ENCODE measurements at regions of chr3 and their contacts with region 1.

Region 1: GRCh38 chr3:105676621-105677300 is 192.1 kb downstream of the CBLB start:
- DNase-seq: no peak
- H3K4me3 Mint-ChIP-seq: peak overlapping the region; percentile 1
- H3K27ac Mint-ChIP-seq: peak overlapping the region; percentile 85
- H3K4me1 Mint-ChIP-seq: peaks cover 36% of the 10 kb centered on the region
- H3K27me3 Mint-ChIP-seq: no peaks in the 10 kb centered on the region

Region 2: GRCh38 chr3:105747060-105747541 is 70.3 kb after region 1 on chr3:
- intact Hi-C with region 1: loop called (anchors 1 kb)
- DNase-seq: no peak
- H3K4me3 Mint-ChIP-seq: peak overlapping the region; percentile 64
- H3K27ac Mint-ChIP-seq: peak overlapping the region; percentile 81
- H3K4me1 Mint-ChIP-seq: peaks cover 79% of the 10 kb centered on the region
- H3K27me3 Mint-ChIP-seq: no peaks in the 10 kb centered on the region

Region 3: GRCh38 chr3:105774444-105775180 is 97.9 kb after region 1 on chr3:
- intact Hi-C with region 1: loop called (anchors 5 kb)
- DNase-seq: no peak
- H3K4me3 Mint-ChIP-seq: no peak overlapping the region
- H3K27ac Mint-ChIP-seq: peak overlapping the region; percentile 76
- H3K4me1 Mint-ChIP-seq: peaks cover 71% of the 10 kb centered on the region
- H3K27me3 Mint-ChIP-seq: no peaks in the 10 kb centered on the region

Region 4: GRCh38 chr3:105836533-105836932 is 159.8 kb after region 1 on chr3:
- intact Hi-C with region 1: loop called (anchors 1 kb)
- DNase-seq: peak; percentile 27
- H3K4me3 Mint-ChIP-seq: peak overlapping the region; percentile 71
- H3K27ac Mint-ChIP-seq: peak overlapping the region; percentile 93
- H3K4me1 Mint-ChIP-seq: peaks cover 85% of the 10 kb centered on the region
- H3K27me3 Mint-ChIP-seq: no peaks in the 10 kb centered on the region

Region 5: DNA sequence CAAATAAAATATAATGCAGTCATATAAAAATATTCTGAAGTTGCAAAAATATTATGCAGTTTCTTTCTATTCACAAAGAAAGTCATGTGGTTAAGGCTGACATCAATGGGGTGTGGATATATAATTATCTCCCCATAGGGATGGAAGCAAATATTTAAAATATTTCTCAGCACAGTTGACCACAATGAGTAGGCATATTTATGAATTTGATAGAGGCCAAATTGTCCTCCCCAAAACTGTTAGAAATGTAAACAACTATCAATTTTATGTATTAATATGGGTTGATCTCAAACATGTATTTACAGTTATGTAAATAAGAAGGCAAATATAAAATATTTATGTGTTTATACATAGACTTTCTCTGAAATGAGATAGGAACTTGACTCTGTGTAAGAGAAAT is 438.1 kb after region 1 on chr3:
- intact Hi-C with region 1: no loop called
- DNase-seq: no peak
- H3K4me3 Mint-ChIP-seq: no peak overlapping the region
- H3K27ac Mint-ChIP-seq: no peak overlapping the region
- H3K4me1 Mint-ChIP-seq: peaks cover 32% of the 10 kb centered on the region
- H3K27me3 Mint-ChIP-seq: no peaks in the 10 kb centered on the region

Region 6: DNA sequence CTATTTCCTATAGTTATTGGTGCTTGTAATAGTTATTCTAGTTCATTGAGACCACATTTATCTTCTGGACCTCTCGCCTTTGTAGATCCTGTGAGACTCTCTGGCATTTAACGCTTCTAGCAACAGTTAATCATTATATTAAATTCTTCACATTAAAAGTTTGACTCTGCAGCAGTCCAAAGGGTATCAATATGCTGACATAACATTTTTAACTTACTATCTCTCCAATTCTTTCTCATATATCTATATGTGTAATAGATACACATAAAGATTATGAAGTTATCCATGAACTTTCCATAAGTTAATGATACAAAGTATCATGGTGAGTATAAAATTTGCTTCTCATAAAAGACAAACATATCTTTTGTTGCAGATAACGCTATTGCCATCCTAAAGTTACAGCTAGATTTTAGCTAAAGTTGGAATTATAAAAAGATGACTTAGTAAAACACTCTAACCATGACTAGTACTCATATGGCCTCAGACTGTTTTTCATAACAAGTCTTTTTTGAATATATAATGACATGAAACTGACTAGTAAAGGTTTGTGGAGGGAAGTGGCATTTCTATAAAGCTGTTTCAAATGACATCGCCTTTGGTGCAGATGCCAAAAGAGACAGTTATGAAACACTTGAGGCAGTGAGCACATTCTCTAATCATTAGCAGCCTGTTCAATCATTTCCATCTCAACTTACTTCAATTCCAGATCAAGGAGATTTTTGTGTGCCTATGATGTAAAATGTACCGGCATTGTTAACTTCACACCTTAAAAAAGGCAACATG is 571.3 kb after region 1 on chr3:
- intact Hi-C with region 1: loop called (anchors 1 kb)
- DNase-seq: no peak
- H3K4me3 Mint-ChIP-seq: peak overlapping the region; percentile 16
- H3K27ac Mint-ChIP-seq: peak overlapping the region; percentile 67
- H3K4me1 Mint-ChIP-seq: peaks cover 32% of the 10 kb centered on the region
- H3K27me3 Mint-ChIP-seq: no peaks in the 10 kb centered on the region

Region 7: GRCh38 chr3:106534206-106534605 is 857.4 kb after region 1 on chr3:
- intact Hi-C with region 1: loop called (anchors 2 kb)
- DNase-seq: peak; percentile 40
- H3K4me3 Mint-ChIP-seq: no peak overlapping the region
- H3K27ac Mint-ChIP-seq: peak overlapping the region; percentile 72
- H3K4me1 Mint-ChIP-seq: peaks cover 28% of the 10 kb centered on the region
- H3K27me3 Mint-ChIP-seq: no peaks in the 10 kb centered on the region